Activated B cell treated with CpG ODN at 0.5 μM for 24 hours (primary cell): ENCODE measurements at regions of chr22 and their contacts with region 1.

Region 1: GRCh38 chr22:38656256-38657044 is at the starts of genes CBY1 and FAM227A:
- DNase-seq: peak; percentile 91
- ATAC-seq: peak; percentile 84
- H3K4me3 Mint-ChIP-seq: peak within 1 kb of the TSS; percentile 94
- H3K27ac Mint-ChIP-seq: peak within 1 kb of the TSS; percentile 99
- H3K4me1 Mint-ChIP-seq: peaks cover 10% of the 10 kb centered on the region
- H3K27me3 Mint-ChIP-seq: no peaks in the 10 kb centered on the region
- CTCF ChIP-seq: no peak
- total RNA-seq, gene CBY1: 7.3 and 14.1 TPM in 2 replicates
- total RNA-seq, gene FAM227A: 0.20 and 0.66 TPM in 2 replicates

Region 2: GRCh38 chr22:37303821-37304274 is 1352.6 kb before region 1 on chr22:
- CTCF ChIA-PET with region 1: no interaction called
- POLR2A ChIA-PET with region 1: no interaction called
- intact Hi-C with region 1: no loop called
- DNase-seq: no peak
- ATAC-seq: no peak
- H3K4me3 Mint-ChIP-seq: no peak overlapping the region
- H3K27ac Mint-ChIP-seq: peak overlapping the region; percentile 59
- H3K4me1 Mint-ChIP-seq: peaks cover 75% of the 10 kb centered on the region
- H3K27me3 Mint-ChIP-seq: no peaks in the 10 kb centered on the region
- CTCF ChIP-seq: no peak

Region 3: DNA sequence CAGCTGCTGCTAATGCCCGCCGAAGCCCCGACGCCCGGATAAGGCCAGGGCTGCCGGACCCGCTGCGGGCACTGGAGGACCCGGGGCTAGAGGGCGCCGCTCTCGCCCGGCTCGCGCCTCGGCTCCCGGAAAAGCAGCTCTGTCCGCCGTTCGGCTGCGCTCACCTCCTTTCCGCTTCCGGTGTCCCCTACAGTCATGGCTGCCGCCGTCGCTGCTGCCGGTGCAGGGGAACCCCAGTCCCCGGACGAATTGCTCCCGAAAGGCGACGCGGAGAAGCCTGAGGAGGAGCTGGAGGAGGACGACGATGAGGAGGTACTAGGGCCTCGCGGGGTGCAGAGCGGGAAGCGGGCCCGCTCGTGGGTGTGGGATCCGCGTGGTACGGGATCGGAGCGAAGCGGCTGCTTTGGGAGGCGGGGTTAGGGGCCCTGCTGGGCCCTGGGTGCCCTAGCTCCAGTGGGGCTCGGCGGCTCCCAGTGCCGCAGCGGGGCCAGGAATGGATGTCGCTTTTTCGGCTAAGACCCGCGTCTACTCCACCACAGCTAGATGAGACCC is 25.4 kb after region 1 on chr22 and contains the start of gene TOMM22:
- CTCF ChIA-PET with region 1: interaction called, 11 read pairs
- POLR2A ChIA-PET with region 1: interaction called, 8 read pairs
- intact Hi-C with region 1: loop called (anchors 1 kb)
- DNase-seq: peak; percentile 84
- ATAC-seq: peak; percentile 98
- H3K4me3 Mint-ChIP-seq: peak within 1 kb of the TSS; percentile 97
- H3K27ac Mint-ChIP-seq: peak within 1 kb of the TSS; percentile 92
- H3K4me1 Mint-ChIP-seq: peaks cover 20% of the 10 kb centered on the region
- H3K27me3 Mint-ChIP-seq: no peaks in the 10 kb centered on the region
- CTCF ChIP-seq: no peak
- total RNA-seq, gene TOMM22: 99.4 and 109 TPM in 2 replicates